ENCODE measurements at regions of chr5 and their contacts with region 1.

Region 1: DNA sequence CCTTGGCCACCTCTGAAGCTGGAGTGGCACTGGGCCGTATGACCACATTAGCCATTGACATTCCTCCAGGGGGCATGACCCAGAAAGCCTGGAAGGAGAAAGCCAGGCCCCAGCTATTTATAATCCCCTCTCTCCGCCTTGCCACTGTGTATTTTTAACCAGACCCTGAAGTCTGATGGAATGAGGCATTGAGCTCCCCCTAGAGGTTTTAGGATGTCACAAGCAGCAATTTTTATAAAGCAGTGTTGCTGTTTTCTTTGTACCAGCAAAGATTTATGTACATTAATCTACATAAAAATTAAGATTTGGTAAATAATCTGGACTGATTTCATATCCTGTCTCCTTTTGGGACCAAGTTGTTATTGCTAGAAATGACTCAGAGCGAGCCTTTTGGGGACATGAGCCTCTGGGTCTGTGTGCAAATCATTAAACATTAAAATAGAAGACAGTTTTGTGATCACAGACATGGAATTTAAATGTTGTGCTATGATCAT is 127.1 kb downstream of the TRIO start:
- DNase-seq: peak; percentile 82
- H3K4me3 ChIP-seq: no peak overlapping the region
- H3K27ac ChIP-seq: no peak overlapping the region
- H3K4me1 ChIP-seq: peaks cover 74% of the 10 kb centered on the region
- H3K27me3 ChIP-seq: no peaks in the 10 kb centered on the region
- CTCF ChIP-seq: peak; percentile 86

Region 2: GRCh38 chr5:14108170-14108996 is 161.9 kb before region 1 on chr5:
- CTCF ChIA-PET with region 1: interaction called, 3 read pairs
- POLR2A ChIA-PET with region 1: no interaction called
- intact Hi-C with region 1: loop called (anchors 1 kb)
- DNase-seq: peak; percentile 86
- H3K4me3 ChIP-seq: no peak overlapping the region
- H3K27ac ChIP-seq: no peak overlapping the region
- H3K4me1 ChIP-seq: peaks cover 5% of the 10 kb centered on the region
- H3K27me3 ChIP-seq: no peaks in the 10 kb centered on the region
- CTCF ChIP-seq: peak; percentile 88

Region 3: GRCh38 chr5:14615344-14615743 is 345.1 kb after region 1 on chr5:
- CTCF ChIA-PET with region 1: no interaction called
- POLR2A ChIA-PET with region 1: no interaction called
- intact Hi-C with region 1: no loop called
- DNase-seq: no peak
- H3K4me3 ChIP-seq: no peak overlapping the region
- H3K27ac ChIP-seq: no peak overlapping the region
- H3K4me1 ChIP-seq: no peaks in the 10 kb centered on the region
- H3K27me3 ChIP-seq: peaks cover 30% of the 10 kb centered on the region
- CTCF ChIP-seq: no peak

Measured in A673 (cell line).